ENCODE measurements at regions of chr1 and their contacts with region 1.

Region 1: DNA sequence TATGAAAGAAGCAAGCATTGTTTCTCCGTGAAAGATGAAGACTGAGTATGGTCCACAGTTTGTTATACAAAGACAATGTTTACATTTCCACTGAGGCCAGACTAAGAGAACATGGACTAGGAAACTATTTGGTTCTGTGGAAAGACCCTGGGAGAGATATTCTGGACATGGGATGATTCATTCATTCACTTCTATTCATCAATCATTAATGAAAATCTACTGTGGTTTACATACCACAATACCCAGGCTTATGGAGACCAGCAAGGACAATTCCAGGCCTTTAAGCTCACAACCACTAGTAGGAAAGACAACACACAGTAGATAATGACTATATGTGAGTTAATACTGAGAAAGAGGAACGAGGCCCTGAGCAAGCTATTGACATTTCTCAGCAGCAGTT is 125.4 kb downstream of the TBX15 start:
- DNase-seq: peak; percentile 9
- ATAC-seq: peak; percentile 48; the same call in 1 of the 3 replicates
- H3K4me3 ChIP-seq: no peak overlapping the region
- H3K27ac ChIP-seq: no peak overlapping the region
- H3K4me1 ChIP-seq: peaks cover 16% of the 10 kb centered on the region; the same call in 1 of the 2 replicates
- H3K27me3 ChIP-seq: no peaks in the 10 kb centered on the region
- CTCF ChIP-seq: no peak
- EP300 ChIP-seq: no peak
- POLR2A ChIP-seq: no peak
- RAD21 ChIP-seq: no peak

Region 2: GRCh38 chr1:118900643-118901440 is 38.1 kb after region 1 on chr1:
- CTCF ChIA-PET with region 1: no interaction called
- POLR2A ChIA-PET with region 1: no interaction called
- in situ Hi-C with region 1: no loop called
- intact Hi-C with region 1: loop called (anchors 1 kb)
- DNase-seq: no peak
- ATAC-seq: no peak
- H3K4me3 ChIP-seq: no peak overlapping the region
- H3K27ac ChIP-seq: no peak overlapping the region
- H3K4me1 ChIP-seq: peaks cover 16% of the 10 kb centered on the region
- H3K27me3 ChIP-seq: no peaks in the 10 kb centered on the region
- CTCF ChIP-seq: no peak
- EP300 ChIP-seq: no peak
- POLR2A ChIP-seq: no peak
- RAD21 ChIP-seq: no peak